H1 (cell line): ENCODE measurements at regions of chr1 and their contacts with region 1.

Region 1: DNA sequence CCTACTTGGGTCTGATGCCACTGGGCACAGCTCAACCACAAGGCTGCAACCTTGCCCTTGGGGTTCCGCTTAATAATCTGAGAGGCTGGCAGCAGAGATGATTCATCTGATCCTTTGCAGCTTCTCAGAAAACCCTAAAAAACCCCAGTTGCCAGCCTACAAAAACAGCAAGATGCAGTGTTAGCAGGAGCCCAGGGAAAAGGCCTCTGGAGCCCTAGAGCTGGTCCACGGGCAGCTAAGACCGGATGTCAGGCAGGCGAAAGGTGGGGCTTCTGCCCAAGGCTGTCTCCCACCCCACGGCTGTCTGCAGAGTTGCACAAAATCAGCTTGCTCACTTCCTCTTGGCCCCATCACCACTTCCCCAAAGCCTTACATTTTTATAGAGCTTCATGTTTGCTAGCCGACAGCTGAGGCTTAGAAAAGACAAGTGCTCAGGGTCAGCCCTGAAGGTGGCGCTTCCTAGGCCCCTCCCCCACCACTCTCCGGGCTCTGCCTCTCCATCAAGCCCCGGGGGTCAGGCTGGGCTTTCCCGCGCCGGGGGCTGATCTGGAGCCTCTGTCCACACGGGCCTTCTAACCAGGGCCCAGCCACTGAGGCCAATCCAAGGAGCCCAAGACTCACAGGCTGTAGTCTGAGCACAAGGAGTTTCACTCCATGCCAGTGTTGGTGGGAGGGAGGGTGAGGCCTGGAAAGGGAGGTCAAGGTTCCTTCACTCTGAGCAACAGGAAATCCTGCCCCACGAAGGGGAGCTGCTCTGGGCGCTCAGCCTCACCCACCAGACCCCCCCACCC is 4.2 kb upstream of the ADORA3 start:
- DNase-seq: peak; percentile 27 to 90
- H3K4me3 ChIP-seq: peak overlapping the region; percentile 6 to 59 (median 38); a peak in 7 of 8 replicates
- H3K27ac ChIP-seq: peak overlapping the region; percentile 67; the same call in 1 of the 2 replicates
- H3K4me1 ChIP-seq: peaks cover 0 to 9% (median 3%) of the 10 kb centered on the region in 4 experiments; a peak in 5 of 7 replicates
- H3K27me3 ChIP-seq: no peaks in the 10 kb centered on the region; a peak in 1 of 7 replicates
- CTCF ChIP-seq: peak; percentile 35 to 38 (median 36)
- EP300 ChIP-seq: no peak
- POLR2A ChIP-seq: 0 out of 3 replicates have a peak, but pooled peaks of 1 of the 2 experiments have one; percentile 10
- RAD21 ChIP-seq: peak; percentile 19 to 20; a peak in 1 of 4 replicates

Region 2: GRCh38 chr1:111436726-111437125 is 70.9 kb before region 1 on chr1:
- CTCF ChIA-PET with region 1: no interaction called
- POLR2A ChIA-PET with region 1: no interaction called
- DNase-seq: no peak
- H3K4me3 ChIP-seq: no peak overlapping the region
- H3K27ac ChIP-seq: no peak overlapping the region
- H3K4me1 ChIP-seq: no peaks in the 10 kb centered on the region
- H3K27me3 ChIP-seq: no peaks in the 10 kb centered on the region
- CTCF ChIP-seq: no peak
- EP300 ChIP-seq: no peak
- POLR2A ChIP-seq: no peak
- RAD21 ChIP-seq: no peak

Region 3: DNA sequence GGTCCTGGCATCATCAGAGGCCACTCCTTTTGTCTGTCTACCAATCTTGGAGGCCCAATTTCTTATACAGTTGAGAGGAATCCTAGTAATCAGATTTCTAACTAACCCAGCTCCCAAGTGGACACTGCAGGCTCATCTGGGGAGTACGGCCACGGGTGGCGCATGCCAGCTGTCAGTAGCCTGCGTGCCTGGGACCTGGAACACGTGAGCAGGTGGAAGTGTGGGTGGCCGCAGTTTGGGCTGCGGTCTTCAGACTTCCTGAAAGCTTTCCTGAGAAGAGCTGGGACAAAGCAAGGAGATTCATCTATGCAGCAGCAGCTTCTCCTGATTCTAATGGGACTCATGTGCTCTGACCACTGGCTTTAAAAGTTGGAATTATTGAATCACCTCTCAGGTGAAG is 16.5 kb before region 1 on chr1:
- CTCF ChIA-PET with region 1: interaction called, 16 read pairs
- POLR2A ChIA-PET with region 1: interaction called, 3 read pairs
- DNase-seq: no peak
- H3K4me3 ChIP-seq: no peak overlapping the region
- H3K27ac ChIP-seq: no peak overlapping the region
- H3K4me1 ChIP-seq: no peaks in the 10 kb centered on the region
- H3K27me3 ChIP-seq: no peaks in the 10 kb centered on the region
- CTCF ChIP-seq: no peak
- EP300 ChIP-seq: no peak
- POLR2A ChIP-seq: no peak
- RAD21 ChIP-seq: no peak

Region 4: DNA sequence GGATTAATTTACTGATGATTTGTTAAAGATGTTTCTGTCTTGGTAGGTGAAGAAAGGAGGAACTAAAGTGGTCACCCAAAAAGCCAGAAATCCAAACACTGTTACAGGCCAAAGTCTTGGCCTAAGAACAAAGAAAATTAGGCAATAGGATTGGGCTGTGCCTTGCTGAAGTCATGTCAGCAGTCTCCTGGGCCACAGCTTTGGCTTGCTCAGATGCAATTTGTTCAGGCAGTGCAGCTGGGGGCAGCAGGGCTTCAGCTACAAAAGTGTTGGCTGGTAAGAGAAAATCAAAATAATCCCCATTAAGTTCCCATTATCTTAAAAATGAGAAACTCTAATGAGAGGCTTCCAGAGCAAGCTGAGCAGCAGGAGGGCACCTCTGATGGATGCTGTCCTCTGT is 98.0 kb after region 1 on chr1:
- CTCF ChIA-PET with region 1: interaction called, 10 read pairs
- POLR2A ChIA-PET with region 1: no interaction called
- DNase-seq: no peak
- H3K4me3 ChIP-seq: no peak overlapping the region
- H3K27ac ChIP-seq: no peak overlapping the region
- H3K4me1 ChIP-seq: no peaks in the 10 kb centered on the region
- H3K27me3 ChIP-seq: no peaks in the 10 kb centered on the region
- CTCF ChIP-seq: no peak
- EP300 ChIP-seq: no peak
- POLR2A ChIP-seq: no peak
- RAD21 ChIP-seq: no peak

Region 5: DNA sequence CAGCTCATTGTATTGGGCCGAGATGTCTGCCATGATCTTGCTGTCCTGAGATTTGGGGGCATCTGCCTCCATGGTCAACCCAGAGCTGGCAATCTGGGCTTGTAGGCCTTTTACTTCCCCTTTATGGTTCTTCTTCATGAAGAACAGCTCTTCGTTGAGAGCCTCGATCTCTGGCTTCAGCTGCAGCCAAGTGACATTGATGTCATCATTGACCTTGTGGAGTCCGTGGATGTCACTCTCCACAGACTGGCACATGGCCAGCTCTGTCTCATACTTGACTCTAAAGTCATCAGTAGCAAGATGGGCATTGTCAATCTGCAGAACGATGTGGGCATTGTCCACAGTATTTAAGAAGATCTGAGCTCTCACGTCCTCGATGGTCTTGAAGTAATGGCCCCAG is 141.2 kb after region 1 on chr1:
- CTCF ChIA-PET with region 1: interaction called, 11 read pairs
- POLR2A ChIA-PET with region 1: no interaction called
- DNase-seq: no peak
- H3K4me3 ChIP-seq: no peak overlapping the region
- H3K27ac ChIP-seq: no peak overlapping the region
- H3K4me1 ChIP-seq: no peaks in the 10 kb centered on the region
- H3K27me3 ChIP-seq: no peaks in the 10 kb centered on the region
- CTCF ChIP-seq: no peak
- EP300 ChIP-seq: no peak
- POLR2A ChIP-seq: no peak
- RAD21 ChIP-seq: no peak

Region 6: DNA sequence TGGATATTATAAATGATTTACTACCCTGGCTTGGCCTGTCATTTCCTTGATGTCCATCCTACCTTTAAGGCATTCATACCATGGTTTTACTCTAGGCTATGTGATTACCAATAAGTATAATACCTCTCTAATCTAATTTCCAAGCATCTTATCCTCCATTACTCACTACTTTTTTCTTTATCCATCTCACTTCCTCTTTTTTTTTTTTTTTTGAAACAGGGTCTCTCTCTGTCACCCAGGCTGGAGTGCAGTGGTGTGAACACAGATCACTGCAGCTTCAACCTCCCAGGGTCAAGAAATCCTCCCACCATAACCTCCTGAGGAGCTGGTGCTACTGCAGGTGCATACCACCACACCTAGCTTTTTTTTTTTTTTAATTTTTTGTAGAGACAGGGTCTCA is 191.7 kb after region 1 on chr1:
- CTCF ChIA-PET with region 1: interaction called, 10 read pairs
- POLR2A ChIA-PET with region 1: interaction called, 3 read pairs
- DNase-seq: no peak
- H3K4me3 ChIP-seq: no peak overlapping the region
- H3K27ac ChIP-seq: no peak overlapping the region
- H3K4me1 ChIP-seq: no peaks in the 10 kb centered on the region
- H3K27me3 ChIP-seq: no peaks in the 10 kb centered on the region
- CTCF ChIP-seq: no peak
- EP300 ChIP-seq: no peak
- POLR2A ChIP-seq: no peak
- RAD21 ChIP-seq: no peak

Region 7: DNA sequence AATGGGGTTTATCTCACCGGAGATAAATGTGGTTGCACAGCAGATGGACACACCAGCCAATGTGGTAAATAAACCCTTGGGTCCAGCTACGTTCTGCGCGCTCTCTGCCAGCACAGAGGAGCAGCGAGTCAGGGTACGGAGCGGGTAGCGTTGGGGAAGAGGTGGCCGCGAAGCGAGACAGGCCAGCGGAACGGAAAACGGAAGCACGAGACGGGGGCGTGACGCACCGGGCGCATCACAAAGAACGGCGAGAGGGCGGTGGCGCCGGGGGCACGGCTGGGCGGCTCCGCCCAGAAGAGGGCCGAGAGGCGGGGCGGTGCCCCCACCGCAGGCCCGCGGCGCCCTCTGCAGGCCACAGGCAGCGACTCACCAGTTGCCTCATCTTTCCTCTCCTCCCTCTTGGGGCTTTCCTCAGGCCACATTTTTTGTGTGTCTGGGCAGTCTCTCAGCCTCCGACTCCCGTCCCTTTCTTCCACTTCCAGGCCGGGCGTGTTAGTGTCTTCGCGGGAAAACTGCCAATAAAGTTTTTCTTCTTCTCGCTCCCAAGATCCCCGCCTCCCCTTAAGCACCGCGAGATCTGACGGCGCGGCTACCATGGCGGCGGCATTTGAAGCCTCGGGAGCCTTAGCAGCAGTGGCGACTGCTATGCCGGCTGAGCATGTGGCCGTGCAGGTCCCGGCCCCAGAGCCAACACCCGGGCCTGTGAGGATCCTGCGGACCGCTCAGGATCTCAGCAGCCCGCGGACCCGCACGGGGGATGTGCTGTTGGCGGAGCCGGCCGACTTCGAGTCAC is 247.9 kb after region 1 on chr1 and contains the start of gene DDX20:
- CTCF ChIA-PET with region 1: interaction called, 14 read pairs
- POLR2A ChIA-PET with region 1: interaction called, 4 read pairs
- DNase-seq: peak in 1 of 2 experiments; percentile 92
- H3K4me3 ChIP-seq: peak within 1 kb of the TSS; percentile 89 to 93 (median 91)
- H3K27ac ChIP-seq: peak within 1 kb of the TSS; percentile 86
- H3K4me1 ChIP-seq: peaks cover 0 to 3% (median 0%) of the 10 kb centered on the region in 4 experiments; a peak in 1 of 7 replicates
- H3K27me3 ChIP-seq: no peaks in the 10 kb centered on the region
- CTCF ChIP-seq: peak; percentile 67 to 84 (median 83)
- EP300 ChIP-seq: no peak
- POLR2A ChIP-seq: peak; percentile 78 to 91
- RAD21 ChIP-seq: peak; percentile 65 to 66
- total RNA-seq, gene DDX20: 24.7 and 25.4 TPM in 2 replicates